ENCODE measurements at regions of chr19 and their contacts with region 1.

Region 1: DNA sequence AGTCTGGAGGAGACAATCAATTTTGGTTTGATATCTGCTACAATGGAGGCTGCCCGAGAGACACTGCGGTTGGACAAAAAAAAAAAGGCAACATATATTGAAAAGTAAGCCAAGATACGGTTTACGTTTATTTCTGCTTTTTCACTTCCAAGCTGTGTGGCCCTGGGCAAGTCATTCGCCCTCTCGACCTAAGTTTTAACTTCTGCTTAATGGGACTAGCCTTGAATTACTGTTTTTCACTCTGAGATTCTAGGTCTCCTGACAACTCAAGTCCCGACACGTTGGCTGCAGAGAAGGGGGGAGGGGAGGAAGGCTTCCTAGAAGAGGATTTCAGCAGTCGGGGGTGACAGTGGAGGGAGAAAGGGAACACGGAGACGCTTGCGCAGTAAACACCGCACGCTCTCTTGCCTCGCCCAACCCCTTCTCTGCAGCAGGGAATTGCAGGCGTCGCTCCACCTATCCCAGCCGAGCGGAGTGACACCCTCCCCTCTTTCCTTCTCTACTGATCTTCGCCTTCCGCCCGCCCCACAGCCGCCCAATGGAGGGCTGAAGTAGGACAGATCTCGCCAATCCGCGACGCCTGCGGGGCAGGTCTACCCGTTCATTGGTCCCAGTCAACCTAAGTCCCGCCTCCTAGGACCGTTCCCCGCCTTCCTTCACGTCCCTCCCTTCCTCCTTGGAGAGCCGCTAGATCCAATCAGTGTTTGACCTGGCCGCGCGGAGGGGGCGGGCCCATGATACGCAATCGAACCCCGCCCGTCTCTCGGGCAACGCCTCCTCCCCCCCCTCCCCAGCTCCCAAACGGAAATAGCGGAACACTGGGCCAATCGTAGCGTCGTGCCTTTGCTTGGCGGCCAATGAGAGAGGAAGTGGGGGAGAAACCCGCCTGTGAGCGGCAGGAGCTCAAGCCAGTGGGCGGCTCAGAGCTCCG is 529 bp upstream of the AP2A1 start:
- DNase-seq: peak; percentile 99
- ATAC-seq: peak; percentile 93
- H3K4me3 Mint-ChIP-seq: peak overlapping the region; percentile 94
- H3K27ac Mint-ChIP-seq: peak overlapping the region; percentile 93
- H3K4me1 Mint-ChIP-seq: peaks cover 36% of the 10 kb centered on the region
- H3K27me3 Mint-ChIP-seq: no peaks in the 10 kb centered on the region

Region 2: GRCh38 chr19:49451430-49452181 is 314.7 kb before region 1 on chr19 and contains the start of gene PIH1D1:
- CTCF ChIA-PET with region 1: no interaction called
- POLR2A ChIA-PET with region 1: no interaction called
- intact Hi-C with region 1: loop called (anchors 1 to 5 kb)
- DNase-seq: peak; percentile 98
- ATAC-seq: peak; percentile 71
- H3K4me3 Mint-ChIP-seq: peak within 1 kb of the TSS; percentile 100
- H3K27ac Mint-ChIP-seq: peak within 1 kb of the TSS; percentile 100
- H3K4me1 Mint-ChIP-seq: peaks cover 50% of the 10 kb centered on the region
- H3K27me3 Mint-ChIP-seq: no peaks in the 10 kb centered on the region
- total RNA-seq, gene PIH1D1: 117 to 138 TPM

Region 3: DNA sequence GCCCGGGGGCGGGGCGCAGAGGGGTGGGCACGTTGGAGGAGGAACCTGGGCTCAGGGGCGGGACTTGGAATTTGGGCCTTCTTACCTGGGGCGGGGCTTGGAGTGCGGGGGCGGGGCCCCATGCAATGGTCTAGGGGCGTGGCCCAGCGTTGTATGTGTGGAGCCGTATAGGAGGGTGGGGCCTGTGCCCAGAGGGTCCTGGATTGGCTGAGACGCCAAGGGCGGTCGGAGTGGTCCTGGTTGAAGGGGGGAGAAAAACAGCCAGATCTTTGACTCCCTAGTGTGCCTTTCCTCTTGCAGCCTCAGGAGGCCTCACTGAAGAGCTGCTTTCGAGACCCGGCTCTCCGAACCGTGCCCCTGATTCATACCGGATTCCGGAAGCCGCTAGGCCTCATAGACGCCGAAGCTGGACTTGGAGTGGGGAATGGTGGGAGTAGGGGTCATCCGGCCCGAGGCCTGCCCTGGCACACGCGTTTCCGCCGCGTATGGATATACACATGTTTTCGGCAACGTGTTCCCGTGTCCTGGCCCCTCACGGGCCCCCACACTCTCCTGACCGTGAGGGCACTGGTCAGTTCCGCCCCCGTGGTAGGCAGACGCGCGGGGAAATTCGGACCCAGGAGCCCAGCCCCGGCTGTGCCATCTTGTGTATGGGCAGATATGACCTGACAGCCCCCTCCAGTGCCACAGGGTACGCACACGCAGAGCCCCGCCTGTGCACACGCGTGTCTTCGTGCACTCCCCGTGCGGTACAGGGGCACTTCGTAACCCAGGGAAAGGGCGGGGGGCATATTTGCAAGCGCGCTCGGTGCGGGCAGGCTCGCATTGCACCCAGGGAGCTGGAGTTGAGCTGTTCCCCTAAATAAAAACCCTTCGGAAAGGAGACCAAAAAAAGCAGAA is 176.0 kb before region 1 on chr19:
- CTCF ChIA-PET with region 1: no interaction called
- POLR2A ChIA-PET with region 1: interaction called, 3 read pairs
- intact Hi-C with region 1: loop called (anchors 1 kb)
- DNase-seq: peak; percentile 98
- ATAC-seq: peak; percentile 80
- H3K4me3 Mint-ChIP-seq: peak overlapping the region; percentile 79
- H3K27ac Mint-ChIP-seq: peak overlapping the region; percentile 84
- H3K4me1 Mint-ChIP-seq: peaks cover 28% of the 10 kb centered on the region
- H3K27me3 Mint-ChIP-seq: no peaks in the 10 kb centered on the region

Region 4: GRCh38 chr19:49690656-49691242 is 75.5 kb before region 1 on chr19 and contains the start of gene CPT1C:
- CTCF ChIA-PET with region 1: no interaction called
- POLR2A ChIA-PET with region 1: no interaction called
- intact Hi-C with region 1: no loop called
- DNase-seq: peak; percentile 77
- ATAC-seq: peak; percentile 72
- H3K4me3 Mint-ChIP-seq: peak within 1 kb of the TSS; percentile 62
- H3K27ac Mint-ChIP-seq: peak within 1 kb of the TSS; percentile 51
- H3K4me1 Mint-ChIP-seq: peaks cover 23% of the 10 kb centered on the region
- H3K27me3 Mint-ChIP-seq: peaks cover 16% of the 10 kb centered on the region
- total RNA-seq, gene CPT1C: 1.1 to 1.6 TPM

Region 5: GRCh38 chr19:49808711-49809159 is 42.5 kb after region 1 on chr19:
- CTCF ChIA-PET with region 1: interaction called, 3 read pairs
- POLR2A ChIA-PET with region 1: no interaction called
- intact Hi-C with region 1: loop called (anchors 1 kb)
- DNase-seq: peak; percentile 95
- ATAC-seq: peak; percentile 52
- H3K4me3 Mint-ChIP-seq: peak overlapping the region; percentile 78
- H3K27ac Mint-ChIP-seq: peak overlapping the region; percentile 73
- H3K4me1 Mint-ChIP-seq: peaks cover 22% of the 10 kb centered on the region
- H3K27me3 Mint-ChIP-seq: no peaks in the 10 kb centered on the region

Region 6: GRCh38 chr19:49869441-49870176 is 103.3 kb after region 1 on chr19:
- CTCF ChIA-PET with region 1: interaction called, 3 read pairs
- POLR2A ChIA-PET with region 1: interaction called, 7 read pairs
- intact Hi-C with region 1: loop called in 1 of 2 experiments (anchors 1 kb)
- DNase-seq: peak; percentile 94
- ATAC-seq: peak; percentile 87
- H3K4me3 Mint-ChIP-seq: no peak overlapping the region
- H3K27ac Mint-ChIP-seq: no peak overlapping the region
- H3K4me1 Mint-ChIP-seq: peaks cover 39% of the 10 kb centered on the region
- H3K27me3 Mint-ChIP-seq: no peaks in the 10 kb centered on the region

Region 7: DNA sequence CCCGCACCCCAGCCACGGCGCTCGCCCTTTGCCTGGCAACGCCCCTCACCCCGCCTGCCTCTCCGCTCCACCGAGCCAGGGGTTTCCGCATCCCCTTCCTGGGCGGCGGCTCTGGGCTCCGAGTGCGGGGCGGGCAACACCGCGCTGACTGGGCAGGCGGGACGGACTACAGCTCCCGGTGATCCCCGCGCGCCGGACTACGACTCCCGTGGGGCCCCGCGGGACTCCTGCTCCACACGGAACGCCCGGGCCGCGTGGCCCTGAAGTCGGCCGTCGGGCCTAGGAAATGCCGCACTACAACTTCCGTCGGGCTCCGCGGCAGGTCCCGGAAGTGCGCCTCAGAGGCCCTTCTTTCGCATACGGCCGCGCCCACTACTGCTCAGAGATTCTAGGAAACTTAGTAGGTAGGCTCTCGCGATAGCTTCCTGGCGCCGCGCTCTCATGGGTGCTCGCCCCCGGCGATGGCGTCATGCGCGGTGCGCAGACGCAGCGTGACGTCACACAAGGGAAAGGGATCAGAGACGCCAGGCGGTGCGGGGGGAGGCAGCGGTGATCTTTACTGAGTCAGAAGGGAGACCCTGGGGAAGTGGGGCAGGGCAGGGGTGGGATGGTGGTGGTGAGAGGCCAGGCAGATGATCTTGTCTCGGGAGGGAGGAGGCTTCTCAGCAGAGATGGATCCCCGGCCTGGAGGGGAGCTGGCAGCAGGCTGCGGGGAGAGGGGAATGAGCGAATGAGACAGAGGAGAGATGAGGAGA is 745.0 kb after region 1 on chr19 and contains the start of gene JOSD2:
- CTCF ChIA-PET with region 1: no interaction called
- POLR2A ChIA-PET with region 1: no interaction called
- intact Hi-C with region 1: loop called in 1 of 2 experiments (anchors 1 kb)
- DNase-seq: peak; percentile 99
- ATAC-seq: peak; percentile 97
- H3K4me3 Mint-ChIP-seq: peak within 1 kb of the TSS; percentile 84
- H3K27ac Mint-ChIP-seq: peak within 1 kb of the TSS; percentile 92
- H3K4me1 Mint-ChIP-seq: peaks cover 14% of the 10 kb centered on the region
- H3K27me3 Mint-ChIP-seq: peaks cover 5% of the 10 kb centered on the region
- total RNA-seq, gene JOSD2: 17.4 to 28.1 TPM